Prostate gland (tissue), 2 donors: ENCODE measurements at regions of chr9 and their contacts with region 1.

Region 1: GRCh38 chr9:129884220-129885017 is 49.2 kb downstream of the USP20 start:
- DNase-seq: peak; percentile 89
- H3K4me3 ChIP-seq: peak overlapping the region; percentile 12 to 27
- H3K27ac ChIP-seq: peak overlapping the region; percentile 65 to 80
- H3K4me1 ChIP-seq: peaks cover 19% of the 10 kb centered on the region
- H3K27me3 ChIP-seq: no peaks in the 10 kb centered on the region
- CTCF ChIP-seq: peak in 1 of 4 experiments; percentile 4
- POLR2A ChIP-seq: peak; percentile 48

Region 2: DNA sequence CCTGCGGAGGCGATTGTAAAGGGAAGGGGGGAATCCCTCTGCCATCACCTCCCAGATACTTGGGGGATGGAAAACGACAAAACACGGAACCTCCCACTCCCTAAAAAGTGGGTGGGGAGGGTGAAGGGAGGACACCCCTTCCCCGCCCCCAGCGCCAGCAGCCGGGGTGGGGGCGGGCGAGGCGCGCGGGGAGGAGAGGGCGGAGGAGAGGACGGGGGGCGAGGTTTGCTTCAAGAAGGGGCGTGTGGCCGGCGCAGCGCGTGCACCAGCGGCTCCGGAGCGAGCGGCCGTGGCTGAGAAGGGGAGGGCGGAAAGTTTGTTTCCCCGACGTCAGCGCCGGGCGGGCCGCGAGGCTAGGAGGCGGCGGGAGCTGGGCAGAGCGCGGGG is 219.0 kb before region 1 on chr9 and contains the start of gene PRRX2:
- intact Hi-C with region 1: no loop called
- DNase-seq: no peak
- H3K4me3 ChIP-seq: peak within 1 kb of the TSS; percentile 31 to 36
- H3K27ac ChIP-seq: peak within 1 kb of the TSS; percentile 49 to 55
- H3K4me1 ChIP-seq: no peaks in the 10 kb centered on the region
- H3K27me3 ChIP-seq: no peaks in the 10 kb centered on the region
- CTCF ChIP-seq: no peak
- POLR2A ChIP-seq: no peak
- total RNA-seq, gene PRRX2: 4.3 to 14.3 TPM

Region 3: GRCh38 chr9:129835021-129835871 is 49.2 kb before region 1 on chr9 and contains the starts of genes C9orf78 and USP20:
- intact Hi-C with region 1: loop called (anchors 5 kb)
- DNase-seq: peak; percentile 96
- H3K4me3 ChIP-seq: peak within 1 kb of the TSS; percentile 97 to 99
- H3K27ac ChIP-seq: peak within 1 kb of the TSS; percentile 84 to 90
- H3K4me1 ChIP-seq: no peaks in the 10 kb centered on the region
- H3K27me3 ChIP-seq: no peaks in the 10 kb centered on the region
- CTCF ChIP-seq: peak in 2 of 4 experiments; percentile 8 to 18
- POLR2A ChIP-seq: peak; percentile 89
- total RNA-seq, gene C9orf78: 63.7 to 76.8 TPM
- total RNA-seq, gene USP20: 34.8 to 53.5 TPM

Region 4: DNA sequence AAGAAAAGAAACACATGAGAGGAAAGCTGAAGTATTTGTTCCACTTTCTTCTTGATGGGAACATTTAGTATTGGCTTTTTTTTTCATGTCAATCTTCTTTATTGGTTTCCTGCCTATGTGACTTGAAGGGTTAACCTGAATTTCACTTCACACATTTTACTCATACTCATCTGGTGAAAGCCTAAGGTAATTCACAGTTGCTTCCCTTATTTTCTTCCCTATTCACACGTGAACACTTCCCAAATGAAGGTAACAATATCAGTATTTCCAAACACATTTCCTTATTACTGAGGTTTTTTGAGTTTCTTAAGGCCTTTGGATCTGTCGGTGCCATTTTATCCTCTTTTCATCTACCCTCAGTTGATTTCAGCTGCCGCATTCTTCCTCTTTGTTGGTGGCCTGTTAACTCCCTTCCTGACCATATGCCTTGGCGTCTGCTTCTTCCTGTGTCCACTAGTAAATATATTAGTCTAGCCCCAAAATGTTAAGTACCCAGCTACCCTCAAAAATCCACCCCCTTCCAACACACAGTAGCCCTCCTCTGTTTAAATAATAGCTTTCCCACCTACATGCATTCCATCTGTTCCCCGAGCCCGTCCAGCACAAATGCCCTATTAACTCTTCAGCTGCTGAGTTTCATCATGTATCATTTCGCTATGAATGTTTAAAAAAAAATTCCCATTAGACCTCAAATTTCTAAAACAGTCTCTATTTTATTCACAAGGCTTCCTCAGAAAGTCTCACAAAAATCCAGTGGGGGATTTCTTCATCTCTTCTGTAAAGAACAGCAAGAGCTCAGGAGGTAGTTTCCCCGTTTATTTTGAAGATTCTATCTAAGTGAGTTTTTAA is 48.1 kb after region 1 on chr9:
- intact Hi-C with region 1: loop called (anchors 5 kb)
- DNase-seq: no peak
- H3K4me3 ChIP-seq: no peak overlapping the region
- H3K27ac ChIP-seq: peak overlapping the region; percentile 50 to 56
- H3K4me1 ChIP-seq: no peaks in the 10 kb centered on the region
- H3K27me3 ChIP-seq: no peaks in the 10 kb centered on the region
- CTCF ChIP-seq: no peak
- POLR2A ChIP-seq: no peak

Region 5: GRCh38 chr9:130042833-130043653 is 158.6 kb after region 1 on chr9 and contains the start of gene FNBP1:
- intact Hi-C with region 1: loop called (anchors 1 kb)
- DNase-seq: peak; percentile 76
- H3K4me3 ChIP-seq: peak within 1 kb of the TSS; percentile 80 to 99
- H3K27ac ChIP-seq: peak within 1 kb of the TSS; percentile 95
- H3K4me1 ChIP-seq: peaks cover 10% of the 10 kb centered on the region
- H3K27me3 ChIP-seq: no peaks in the 10 kb centered on the region
- CTCF ChIP-seq: no peak
- POLR2A ChIP-seq: peak; percentile 90
- total RNA-seq, gene FNBP1: 34.6 to 93.7 TPM

Region 6: DNA sequence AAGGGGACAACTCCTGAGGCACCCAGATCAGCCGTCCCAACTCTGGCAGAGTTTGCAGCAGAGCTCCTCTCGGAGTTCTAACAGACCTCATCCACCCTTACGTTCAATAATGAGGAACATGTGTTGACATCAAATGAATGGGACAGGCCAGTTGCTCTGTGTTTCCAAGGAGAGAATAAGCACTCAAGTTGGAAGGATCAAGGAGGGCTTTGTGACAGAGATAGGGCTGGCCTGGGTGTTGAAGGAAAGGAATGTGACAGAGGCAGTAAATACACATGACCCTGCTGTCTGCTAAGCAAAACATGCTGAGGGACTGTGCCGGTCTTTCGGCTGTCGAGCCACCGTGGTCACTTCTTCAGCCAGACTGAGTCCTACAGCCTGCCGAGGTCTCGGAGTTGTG is 217.5 kb after region 1 on chr9:
- intact Hi-C with region 1: loop called (anchors 2 kb)
- DNase-seq: no peak
- H3K4me3 ChIP-seq: no peak overlapping the region
- H3K27ac ChIP-seq: peak overlapping the region in 1 of 2 donors; percentile 33
- H3K4me1 ChIP-seq: no peaks in the 10 kb centered on the region
- H3K27me3 ChIP-seq: no peaks in the 10 kb centered on the region
- CTCF ChIP-seq: no peak
- POLR2A ChIP-seq: no peak

Region 7: GRCh38 chr9:130235897-130236668 is 351.7 kb after region 1 on chr9:
- intact Hi-C with region 1: loop called (anchors 5 kb)
- DNase-seq: peak; percentile 46
- H3K4me3 ChIP-seq: no peak overlapping the region
- H3K27ac ChIP-seq: peak overlapping the region; percentile 50 to 58
- H3K4me1 ChIP-seq: no peaks in the 10 kb centered on the region
- H3K27me3 ChIP-seq: no peaks in the 10 kb centered on the region
- CTCF ChIP-seq: peak; percentile 96 to 100 (median 98)
- POLR2A ChIP-seq: no peak